ENCODE measurements at regions of chr19 and their contacts with region 1.

Region 1: GRCh38 chr19:35013031-35013819 is 13.1 kb downstream of the GRAMD1A start:
- DNase-seq: peak; percentile 40 to 94
- H3K4me3 ChIP-seq: no peak overlapping the region
- CTCF ChIP-seq: peak in 1 of 3 donors; percentile 89
- POLR2A ChIP-seq: no peak

Region 2: GRCh38 chr19:34974646-34975045 is 38.6 kb before region 1 on chr19:
- intact Hi-C with region 1: loop called (anchors 5 kb)
- DNase-seq: no peak
- H3K4me3 ChIP-seq: no peak overlapping the region
- CTCF ChIP-seq: no peak
- POLR2A ChIP-seq: no peak

Region 3: GRCh38 chr19:35269421-35270117 is 256.3 kb after region 1 on chr19:
- intact Hi-C with region 1: no loop called
- DNase-seq: peak; percentile 77 to 96
- H3K4me3 ChIP-seq: peak overlapping the region; percentile 48
- CTCF ChIP-seq: no peak
- POLR2A ChIP-seq: no peak